ENCODE measurements at regions of chr18 and their contacts with region 1.

Region 1: DNA sequence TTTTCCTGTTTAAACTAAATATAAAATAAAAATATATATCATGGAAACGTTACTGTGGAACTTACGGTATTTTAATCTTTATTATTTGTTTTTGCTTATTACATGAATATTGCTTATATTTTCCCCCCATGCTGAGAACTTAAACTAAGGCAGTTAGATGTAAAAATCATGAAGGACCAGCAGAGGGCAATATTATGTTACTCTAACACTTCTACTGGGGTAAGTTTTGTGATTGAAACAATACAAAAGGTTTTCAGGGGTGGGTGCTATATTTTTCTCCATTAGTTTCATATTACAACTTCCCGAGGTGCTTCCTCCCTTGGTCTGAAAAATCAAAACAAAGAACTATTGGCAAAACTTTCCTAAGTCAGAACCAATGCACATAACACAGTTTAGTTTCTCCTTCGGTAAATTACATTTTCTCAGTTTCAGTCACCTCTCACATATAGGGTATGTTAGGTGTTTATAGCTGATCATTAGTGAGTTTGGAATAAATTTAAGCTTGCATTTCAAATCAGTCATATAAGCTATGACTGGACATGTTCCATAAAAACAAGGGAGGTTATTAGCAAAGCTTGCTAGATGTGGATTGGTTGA is 54.8 kb downstream of the ZNF407 start:
- DNase-seq: peak; percentile 36
- ATAC-seq: no peak
- H3K4me3 ChIP-seq: no peak overlapping the region
- H3K4me3 Mint-ChIP-seq: no peak overlapping the region
- H3K27ac ChIP-seq: no peak overlapping the region
- H3K27ac Mint-ChIP-seq: no peak overlapping the region
- H3K4me1 ChIP-seq: no peaks in the 10 kb centered on the region
- H3K4me1 Mint-ChIP-seq: no peaks in the 10 kb centered on the region
- H3K27me3 ChIP-seq: no peaks in the 10 kb centered on the region
- H3K27me3 Mint-ChIP-seq: no peaks in the 10 kb centered on the region
- CTCF ChIP-seq: peak; percentile 77

Region 2: DNA sequence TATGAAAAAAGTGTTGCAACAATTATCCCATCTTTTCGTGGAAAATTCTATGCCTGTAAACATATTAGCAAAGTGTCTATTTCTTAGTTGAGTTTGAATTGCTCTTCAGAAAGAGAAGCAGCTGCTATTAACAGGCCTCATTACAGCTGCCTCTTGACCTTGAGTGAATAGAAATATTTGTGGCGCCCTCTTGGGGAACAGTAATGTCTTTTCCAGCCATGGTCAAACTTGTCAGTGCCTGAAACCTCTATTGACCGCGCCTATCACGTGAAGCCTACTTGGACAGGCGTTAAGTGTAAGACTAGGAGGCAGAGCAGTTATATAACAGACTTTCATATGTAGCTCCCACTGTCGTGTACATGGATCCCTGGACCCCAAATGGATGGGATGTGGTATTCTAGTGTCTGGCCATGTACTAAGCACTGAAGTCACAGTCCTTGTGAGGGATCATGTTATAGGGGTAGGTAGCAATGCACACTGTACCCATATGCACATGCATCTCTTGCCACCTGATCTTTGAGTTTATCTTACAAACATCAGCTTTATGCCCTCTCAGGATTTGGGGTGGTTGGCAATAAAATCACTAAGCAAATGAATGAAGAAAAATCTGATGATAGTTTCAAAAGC is 311.4 kb after region 1 on chr18:
- CTCF ChIA-PET with region 1: interaction called, 3 read pairs
- POLR2A ChIA-PET with region 1: no interaction called
- intact Hi-C with region 1: loop called (anchors 5 kb)
- DNase-seq: no peak
- ATAC-seq: no peak
- H3K4me3 ChIP-seq: no peak overlapping the region
- H3K4me3 Mint-ChIP-seq: no peak overlapping the region
- H3K27ac ChIP-seq: no peak overlapping the region
- H3K27ac Mint-ChIP-seq: no peak overlapping the region
- H3K4me1 ChIP-seq: no peaks in the 10 kb centered on the region
- H3K4me1 Mint-ChIP-seq: no peaks in the 10 kb centered on the region
- H3K27me3 ChIP-seq: no peaks in the 10 kb centered on the region
- H3K27me3 Mint-ChIP-seq: no peaks in the 10 kb centered on the region
- CTCF ChIP-seq: no peak

Region 3: DNA sequence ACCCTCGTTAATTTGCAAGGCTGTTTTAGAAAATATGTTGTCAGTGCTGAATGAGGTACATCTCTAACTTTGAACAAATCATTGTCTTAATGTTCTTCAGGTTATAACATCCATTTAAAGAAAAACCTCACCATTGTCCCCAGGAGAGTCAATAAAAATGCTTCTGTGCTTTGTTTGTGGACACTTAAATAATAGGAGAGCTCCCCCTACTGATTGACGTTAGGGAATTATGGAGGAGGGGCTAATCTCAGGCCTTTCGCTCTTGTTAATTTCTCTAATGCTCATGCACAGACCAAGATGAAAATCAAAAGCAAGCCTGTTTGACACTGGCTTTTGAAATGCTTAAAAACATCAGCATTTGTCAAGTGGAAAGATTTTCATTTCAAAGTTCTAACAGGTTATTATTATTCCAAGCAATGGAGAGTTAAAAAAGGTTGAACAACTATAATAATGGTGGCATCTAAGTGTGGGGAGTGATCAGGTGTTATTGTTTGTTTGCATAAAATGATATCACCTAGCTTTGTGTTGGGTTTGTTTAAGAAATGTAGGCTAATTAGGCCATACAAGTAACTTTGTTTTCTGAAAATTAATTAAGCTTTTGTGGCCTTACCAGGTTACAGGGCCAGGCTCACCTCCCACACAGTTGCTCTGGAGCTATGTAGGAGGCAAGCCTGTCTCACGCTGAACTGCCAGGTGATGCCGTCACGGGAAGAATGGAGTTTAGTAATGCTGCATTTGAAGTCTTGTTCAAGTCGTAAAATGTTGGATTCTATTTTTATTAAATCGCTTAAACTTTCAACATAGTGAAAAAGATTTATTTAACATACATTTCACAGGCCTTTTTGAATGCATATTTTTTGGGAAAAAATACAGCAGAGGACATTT is 826.7 kb after region 1 on chr18:
- CTCF ChIA-PET with region 1: interaction called, 15 read pairs
- POLR2A ChIA-PET with region 1: no interaction called
- intact Hi-C with region 1: no loop called
- DNase-seq: peak; percentile 42
- ATAC-seq: no peak
- H3K4me3 ChIP-seq: no peak overlapping the region
- H3K4me3 Mint-ChIP-seq: no peak overlapping the region
- H3K27ac ChIP-seq: no peak overlapping the region
- H3K27ac Mint-ChIP-seq: no peak overlapping the region
- H3K4me1 ChIP-seq: no peaks in the 10 kb centered on the region
- H3K4me1 Mint-ChIP-seq: no peaks in the 10 kb centered on the region
- H3K27me3 ChIP-seq: no peaks in the 10 kb centered on the region
- H3K27me3 Mint-ChIP-seq: peaks cover 14% of the 10 kb centered on the region
- CTCF ChIP-seq: peak; percentile 55

Region 4: DNA sequence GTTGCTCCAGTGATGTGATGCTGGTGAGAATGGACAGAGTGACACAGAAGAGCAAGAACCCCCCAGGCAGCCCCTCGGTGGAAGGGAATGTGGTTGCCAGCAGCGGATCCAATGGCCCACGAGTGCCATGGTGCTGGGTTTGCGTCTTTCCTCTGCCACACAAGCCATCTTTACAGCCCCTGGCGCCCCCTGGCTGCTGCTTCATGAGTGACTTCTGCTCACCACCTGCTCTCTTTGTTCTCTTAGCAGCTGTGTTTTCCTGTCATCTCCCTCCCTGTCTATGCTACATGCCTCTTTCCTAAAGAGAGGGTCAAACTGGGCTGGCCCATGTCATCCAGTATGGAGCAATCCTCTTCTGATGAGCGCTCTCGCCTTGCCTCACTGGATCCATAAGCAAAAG is 1075.0 kb after region 1 on chr18:
- CTCF ChIA-PET with region 1: interaction called, 3 read pairs
- POLR2A ChIA-PET with region 1: no interaction called
- intact Hi-C with region 1: loop called (anchors 5 kb)
- DNase-seq: no peak
- ATAC-seq: no peak
- H3K4me3 ChIP-seq: no peak overlapping the region
- H3K4me3 Mint-ChIP-seq: no peak overlapping the region
- H3K27ac ChIP-seq: no peak overlapping the region
- H3K27ac Mint-ChIP-seq: no peak overlapping the region
- H3K4me1 ChIP-seq: no peaks in the 10 kb centered on the region
- H3K4me1 Mint-ChIP-seq: no peaks in the 10 kb centered on the region
- H3K27me3 ChIP-seq: no peaks in the 10 kb centered on the region
- H3K27me3 Mint-ChIP-seq: no peaks in the 10 kb centered on the region
- CTCF ChIP-seq: no peak

Measured in B cell (primary cell).